ENCODE measurements at regions of chr17 and their contacts with region 1.

Region 1: DNA sequence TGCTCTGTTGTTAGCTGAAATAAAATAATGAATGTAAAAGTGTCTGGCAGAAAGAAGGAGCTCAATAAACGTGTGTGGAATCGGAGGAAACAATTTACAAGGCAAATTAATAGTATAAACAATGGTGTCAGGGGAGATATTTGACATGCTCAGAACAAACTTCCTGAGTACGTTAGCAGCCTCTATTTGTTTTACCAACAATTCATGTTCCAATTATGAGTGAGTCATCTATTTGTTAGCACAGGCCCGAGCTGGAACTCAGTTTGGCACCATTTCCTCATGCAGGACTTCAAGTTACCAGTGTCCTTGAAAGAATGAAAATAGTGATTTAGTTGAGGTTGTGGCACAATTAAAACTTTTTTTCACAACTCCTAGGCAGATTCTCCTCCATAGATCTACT is 9.1 kb downstream of the ASIC2 start:
- DNase-seq: peak; percentile 42 to 60 (median 54)
- ATAC-seq: peak; percentile 65 to 76
- H3K4me3 ChIP-seq: no peak overlapping the region
- H3K27ac ChIP-seq: no peak overlapping the region
- H3K4me1 ChIP-seq: no peaks in the 10 kb centered on the region
- H3K27me3 ChIP-seq: no peaks in the 10 kb centered on the region

Region 2: DNA sequence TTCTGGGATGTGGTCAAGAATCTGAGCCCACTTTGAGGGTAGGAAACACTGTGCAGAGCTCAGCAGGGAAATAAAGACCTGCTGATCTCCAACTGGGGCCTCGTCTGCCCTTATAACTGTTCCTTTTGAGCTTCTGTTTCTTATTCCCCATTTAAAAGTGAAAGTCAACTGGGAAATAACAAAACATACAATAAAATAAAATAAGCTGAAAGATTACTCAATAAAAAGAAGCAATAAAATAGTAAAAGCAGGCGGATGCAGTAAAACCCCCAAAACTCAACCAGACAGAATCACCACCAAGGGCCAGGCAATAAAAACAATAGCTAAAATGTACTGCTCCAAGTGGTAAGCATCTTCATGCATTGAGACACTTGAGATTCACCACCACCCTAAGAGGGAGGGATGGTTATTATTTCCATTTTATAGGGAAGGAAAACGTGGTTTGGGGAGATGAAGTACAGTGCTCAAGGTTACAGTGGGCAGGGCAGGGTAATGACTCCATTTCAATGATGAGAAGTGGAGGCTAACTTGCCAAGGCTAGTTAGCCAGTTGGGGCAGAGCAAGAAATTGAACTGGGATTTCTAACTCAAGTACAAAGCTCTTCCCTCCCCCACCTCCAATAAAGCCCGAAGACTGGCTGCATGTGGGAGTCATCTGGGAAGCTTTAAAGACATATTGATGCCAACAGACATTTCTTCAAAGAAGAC is 298.8 kb before region 1 on chr17:
- intact Hi-C with region 1: no loop called
- DNase-seq: no peak
- ATAC-seq: no peak
- H3K4me3 ChIP-seq: no peak overlapping the region
- H3K27ac ChIP-seq: no peak overlapping the region
- H3K4me1 ChIP-seq: no peaks in the 10 kb centered on the region
- H3K27me3 ChIP-seq: no peaks in the 10 kb centered on the region

Region 3: GRCh38 chr17:33039874-33040273 is 244.1 kb before region 1 on chr17:
- intact Hi-C with region 1: no loop called
- DNase-seq: no peak
- ATAC-seq: peak; percentile 70 to 90
- H3K4me3 ChIP-seq: no peak overlapping the region
- H3K27ac ChIP-seq: no peak overlapping the region
- H3K4me1 ChIP-seq: peaks cover 3% of the 10 kb centered on the region
- H3K27me3 ChIP-seq: no peaks in the 10 kb centered on the region

Region 4: DNA sequence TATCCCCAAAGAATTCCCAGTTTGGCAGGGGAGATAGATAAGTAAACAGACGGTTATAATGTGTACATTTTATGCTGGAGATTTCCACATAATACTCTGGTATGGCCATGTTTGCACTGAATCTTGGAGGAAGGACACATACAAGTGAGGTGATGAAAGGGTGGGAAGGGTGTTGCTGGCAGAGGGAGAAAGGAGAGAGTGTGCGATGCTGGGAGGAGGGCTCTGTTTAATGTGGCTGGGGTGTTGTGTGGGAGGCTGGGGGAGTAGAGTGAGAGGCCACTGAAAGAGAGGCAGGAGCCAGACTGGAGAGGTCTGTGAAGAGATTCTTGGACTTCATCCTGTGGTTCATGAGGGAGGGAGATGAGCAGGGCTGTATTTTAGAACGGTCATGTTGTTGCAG is 204.8 kb before region 1 on chr17:
- intact Hi-C with region 1: no loop called
- DNase-seq: no peak
- ATAC-seq: no peak
- H3K4me3 ChIP-seq: no peak overlapping the region
- H3K27ac ChIP-seq: no peak overlapping the region
- H3K4me1 ChIP-seq: no peaks in the 10 kb centered on the region
- H3K27me3 ChIP-seq: peaks cover 4% of the 10 kb centered on the region

Region 5: GRCh38 chr17:33220036-33220435 is 64.0 kb before region 1 on chr17:
- intact Hi-C with region 1: loop called in 1 of 4 experiments (anchors 10 kb)
- DNase-seq: no peak
- ATAC-seq: no peak
- H3K4me3 ChIP-seq: no peak overlapping the region
- H3K27ac ChIP-seq: no peak overlapping the region
- H3K4me1 ChIP-seq: no peaks in the 10 kb centered on the region
- H3K27me3 ChIP-seq: no peaks in the 10 kb centered on the region

Measured in right cardiac atrium (tissue), 5 donors.